Activated CD4-positive, alpha-beta T cell treated with anti-CD3 and anti-CD28 coated beads, Interleukin-2, amount 10 ng/mL, durations not matched to agents 24 days and 14 days (primary cell): ENCODE measurements at regions of chr4 and their contacts with region 1.

Region 1: GRCh38 chr4:98658287-98659105 is at the start of gene TSPAN5:
- DNase-seq: peak; percentile 95
- H3K4me3 Mint-ChIP-seq: peak within 1 kb of the TSS; percentile 93
- H3K27ac Mint-ChIP-seq: peak within 1 kb of the TSS; percentile 81
- H3K4me1 Mint-ChIP-seq: peaks cover 70% of the 10 kb centered on the region
- H3K27me3 Mint-ChIP-seq: no peaks in the 10 kb centered on the region
- total RNA-seq, gene TSPAN5: 30.4 and 30.7 TPM in 2 replicates

Region 2: GRCh38 chr4:98143001-98143899 is 515.2 kb before region 1 on chr4 and contains the start of gene STPG2:
- intact Hi-C with region 1: loop called (anchors 2 kb)
- DNase-seq: peak; percentile 98
- H3K4me3 Mint-ChIP-seq: peak within 1 kb of the TSS; percentile 95
- H3K27ac Mint-ChIP-seq: peak within 1 kb of the TSS; percentile 96
- H3K4me1 Mint-ChIP-seq: peaks cover 11% of the 10 kb centered on the region
- H3K27me3 Mint-ChIP-seq: peaks cover 14% of the 10 kb centered on the region
- total RNA-seq, gene STPG2: not detected in 2 replicates

Region 3: GRCh38 chr4:98467627-98468072 is 190.8 kb before region 1 on chr4:
- intact Hi-C with region 1: loop called (anchors 1 kb)
- DNase-seq: peak; percentile 92
- H3K4me3 Mint-ChIP-seq: peak overlapping the region; percentile 79
- H3K27ac Mint-ChIP-seq: peak overlapping the region; percentile 38
- H3K4me1 Mint-ChIP-seq: peaks cover 33% of the 10 kb centered on the region
- H3K27me3 Mint-ChIP-seq: no peaks in the 10 kb centered on the region

Region 4: GRCh38 chr4:98601708-98602107 is 56.8 kb before region 1 on chr4:
- intact Hi-C with region 1: loop called (anchors 1 kb)
- DNase-seq: no peak
- H3K4me3 Mint-ChIP-seq: peak overlapping the region; percentile 72
- H3K27ac Mint-ChIP-seq: peak overlapping the region; percentile 95
- H3K4me1 Mint-ChIP-seq: peaks cover 54% of the 10 kb centered on the region
- H3K27me3 Mint-ChIP-seq: no peaks in the 10 kb centered on the region

Region 5: GRCh38 chr4:98828801-98829200 is 170.3 kb after region 1 on chr4:
- intact Hi-C with region 1: loop called (anchors 5 kb)
- DNase-seq: peak; percentile 68
- H3K4me3 Mint-ChIP-seq: no peak overlapping the region
- H3K27ac Mint-ChIP-seq: no peak overlapping the region
- H3K4me1 Mint-ChIP-seq: peaks cover 6% of the 10 kb centered on the region
- H3K27me3 Mint-ChIP-seq: peaks cover 11% of the 10 kb centered on the region

Region 6: GRCh38 chr4:99054428-99054994 is 396.0 kb after region 1 on chr4:
- intact Hi-C with region 1: loop called (anchors 1 kb)
- DNase-seq: no peak
- H3K4me3 Mint-ChIP-seq: peak overlapping the region; percentile 27
- H3K27ac Mint-ChIP-seq: peak overlapping the region; percentile 79
- H3K4me1 Mint-ChIP-seq: peaks cover 34% of the 10 kb centered on the region
- H3K27me3 Mint-ChIP-seq: no peaks in the 10 kb centered on the region

Region 7: DNA sequence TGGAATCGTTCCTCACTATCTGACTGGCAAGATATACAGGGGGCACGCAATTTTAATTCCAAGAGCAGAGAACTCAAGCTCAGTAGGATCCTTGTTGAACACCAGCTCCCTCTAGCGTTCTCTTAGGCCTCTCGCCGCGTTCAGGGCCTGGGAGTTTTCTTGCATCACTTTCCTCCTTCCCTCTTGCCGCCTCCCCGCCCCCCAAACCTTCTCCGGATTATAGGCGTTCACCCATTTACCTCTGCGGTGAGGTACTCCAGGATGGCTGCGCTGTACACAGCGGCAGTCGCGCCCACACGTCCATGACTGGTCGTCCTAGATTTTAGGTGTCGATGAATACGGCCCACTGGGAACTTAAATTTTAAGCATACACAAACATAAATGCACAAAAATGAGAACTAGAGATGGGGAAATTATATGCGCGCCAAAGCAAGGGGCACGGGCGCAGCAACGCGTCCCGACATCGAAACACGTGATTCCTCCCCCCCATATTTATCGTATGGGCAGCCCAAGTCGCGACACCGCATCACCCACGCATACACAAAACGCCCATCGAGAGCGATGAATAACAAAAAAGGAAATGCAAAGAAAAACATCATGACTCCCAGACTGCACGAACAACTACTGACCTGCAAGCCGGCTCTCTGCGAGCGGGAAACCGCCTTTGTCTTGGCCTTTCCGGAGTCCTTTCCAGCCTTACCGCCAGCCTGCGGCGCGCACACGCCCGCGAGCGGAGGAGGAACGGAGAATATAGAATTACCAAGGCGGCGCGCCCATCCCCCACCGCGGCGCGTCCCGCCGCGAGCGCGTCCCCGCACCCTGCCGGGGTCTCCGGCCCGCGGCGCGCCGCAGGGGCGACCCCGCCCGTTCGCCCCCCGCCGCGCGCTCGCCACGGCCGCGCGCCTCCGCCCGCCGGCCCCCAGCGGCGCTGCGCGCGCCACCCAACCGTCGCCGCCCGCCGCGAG is 1290.8 kb after region 1 on chr4:
- intact Hi-C with region 1: loop called (anchors 5 kb)
- DNase-seq: peak; percentile 96
- H3K4me3 Mint-ChIP-seq: no peak overlapping the region
- H3K27ac Mint-ChIP-seq: no peak overlapping the region
- H3K4me1 Mint-ChIP-seq: peaks cover 26% of the 10 kb centered on the region
- H3K27me3 Mint-ChIP-seq: no peaks in the 10 kb centered on the region